CD4-positive, alpha-beta memory T cell (primary cell): ENCODE measurements at regions of chr22 and their contacts with region 1.

Region 1: GRCh38 chr22:40243891-40244290 is 66.2 kb downstream of the TNRC6B start:
- DNase-seq: peak in 4 of 5 donors; percentile 46 to 61 (median 50)
- H3K4me3 ChIP-seq: peak overlapping the region in 1 of 2 donors; percentile 13
- H3K4me3 Mint-ChIP-seq: peak overlapping the region; percentile 69 to 86 (median 77)
- H3K27ac ChIP-seq: peak overlapping the region; percentile 35
- H3K27ac Mint-ChIP-seq: peak overlapping the region; percentile 53 to 88 (median 79)
- H3K4me1 ChIP-seq: peaks cover 95% of the 10 kb centered on the region
- H3K4me1 Mint-ChIP-seq: peaks cover 63 to 95% (median 76%) of the 10 kb centered on the region in 4 donors
- H3K27me3 ChIP-seq: no peaks in the 10 kb centered on the region
- H3K27me3 Mint-ChIP-seq: no peaks in the 10 kb centered on the region

Region 2: GRCh38 chr22:40055143-40055883 is 188.6 kb before region 1 on chr22:
- CTCF ChIA-PET with region 1: interaction called, 3 read pairs
- POLR2A ChIA-PET with region 1: interaction called, 7 read pairs
- intact Hi-C with region 1: loop called (anchors 5 kb)
- DNase-seq: peak; percentile 53 to 78 (median 63)
- H3K4me3 ChIP-seq: peak overlapping the region; percentile 30 to 33
- H3K4me3 Mint-ChIP-seq: peak overlapping the region; percentile 59 to 86 (median 77)
- H3K27ac ChIP-seq: peak overlapping the region; percentile 64
- H3K27ac Mint-ChIP-seq: peak overlapping the region; percentile 90 to 96 (median 93)
- H3K4me1 ChIP-seq: peaks cover 92% of the 10 kb centered on the region
- H3K4me1 Mint-ChIP-seq: peaks cover 65 to 91% (median 78%) of the 10 kb centered on the region in 4 donors
- H3K27me3 ChIP-seq: no peaks in the 10 kb centered on the region
- H3K27me3 Mint-ChIP-seq: no peaks in the 10 kb centered on the region

Region 3: GRCh38 chr22:40258451-40259046 is 14.7 kb after region 1 on chr22:
- CTCF ChIA-PET with region 1: interaction called, 7 read pairs
- POLR2A ChIA-PET with region 1: interaction called, 15 read pairs
- intact Hi-C with region 1: no loop called
- DNase-seq: peak in 3 of 5 donors; percentile 32 to 58 (median 44)
- H3K4me3 ChIP-seq: no peak overlapping the region
- H3K4me3 Mint-ChIP-seq: peak overlapping the region; percentile 23 to 79 (median 68)
- H3K27ac ChIP-seq: peak overlapping the region; percentile 43
- H3K27ac Mint-ChIP-seq: peak overlapping the region; percentile 65 to 94 (median 81)
- H3K4me1 ChIP-seq: peaks cover 88% of the 10 kb centered on the region
- H3K4me1 Mint-ChIP-seq: peaks cover 54 to 83% (median 71%) of the 10 kb centered on the region in 4 donors
- H3K27me3 ChIP-seq: no peaks in the 10 kb centered on the region
- H3K27me3 Mint-ChIP-seq: no peaks in the 10 kb centered on the region

Region 4: DNA sequence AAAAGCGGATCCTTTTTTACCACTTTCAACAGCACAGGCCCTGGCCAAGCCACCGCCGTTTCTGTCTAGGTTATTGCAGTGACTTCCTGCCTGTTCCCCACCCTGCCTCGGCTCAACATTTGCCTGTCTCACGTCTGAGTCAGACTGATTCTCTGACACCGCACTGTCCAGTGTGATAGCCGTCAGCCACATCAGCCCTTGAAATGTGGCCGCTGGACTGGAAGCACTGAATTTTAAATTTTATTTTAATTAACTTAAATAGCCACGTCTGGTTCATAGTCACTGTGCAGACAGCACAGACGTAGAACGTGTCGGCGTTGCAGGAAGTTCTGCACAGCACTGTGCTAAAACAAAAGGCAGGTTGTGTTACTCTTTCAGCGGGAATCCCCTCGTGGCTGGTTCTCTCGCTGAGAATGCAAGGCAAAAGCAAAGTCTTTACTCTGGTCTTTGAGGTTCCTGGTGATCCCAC is 46.1 kb after region 1 on chr22:
- CTCF ChIA-PET with region 1: no interaction called
- POLR2A ChIA-PET with region 1: interaction called, 3 read pairs
- intact Hi-C with region 1: loop called (anchors 2 kb)
- DNase-seq: peak; percentile 69 to 89 (median 75)
- H3K4me3 ChIP-seq: no peak overlapping the region
- H3K4me3 Mint-ChIP-seq: peak overlapping the region; percentile 13 to 86 (median 78)
- H3K27ac ChIP-seq: peak overlapping the region; percentile 91
- H3K27ac Mint-ChIP-seq: peak overlapping the region; percentile 95 to 99 (median 97)
- H3K4me1 ChIP-seq: peaks cover 66% of the 10 kb centered on the region
- H3K4me1 Mint-ChIP-seq: peaks cover 43 to 73% (median 58%) of the 10 kb centered on the region in 4 donors
- H3K27me3 ChIP-seq: no peaks in the 10 kb centered on the region
- H3K27me3 Mint-ChIP-seq: no peaks in the 10 kb centered on the region